A549 (cell line): ENCODE measurements at regions of chr5 and their contacts with region 1.

Region 1: GRCh38 chr5:176660860-176661641 is 13.8 kb downstream of the TSPAN17 start:
- DNase-seq: peak; percentile 75 to 95
- ATAC-seq: peak; percentile 64 to 90
- H3K4me3 ChIP-seq: no peak overlapping the region
- H3K27ac ChIP-seq: no peak overlapping the region
- H3K4me1 ChIP-seq: no peaks in the 10 kb centered on the region
- CTCF ChIP-seq: peak; percentile 93
- EP300 ChIP-seq: no peak
- POLR2A ChIP-seq: no peak
- RAD21 ChIP-seq: peak; percentile 96 to 97

Region 2: DNA sequence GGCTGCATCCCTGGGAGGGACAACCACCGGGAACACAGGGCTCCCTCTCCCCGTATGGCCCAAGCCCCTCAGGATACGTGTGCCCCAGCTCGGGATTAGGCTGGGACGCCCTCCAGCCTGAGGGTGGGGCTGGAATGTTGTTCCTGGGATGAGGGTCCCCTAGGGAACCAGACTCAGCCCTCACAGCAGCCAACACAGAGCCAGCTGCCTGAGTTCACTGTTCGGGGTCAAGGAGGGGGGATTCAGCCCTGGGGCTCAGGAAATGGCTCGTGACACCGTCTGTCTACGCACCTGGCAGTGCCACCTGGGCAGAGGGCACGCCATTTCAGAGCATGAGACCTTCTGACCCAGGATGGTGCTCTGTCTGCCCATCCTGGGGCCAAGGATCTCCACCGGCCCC is 132.8 kb before region 1 on chr5:
- CTCF ChIA-PET with region 1: no interaction called
- POLR2A ChIA-PET with region 1: no interaction called
- DNase-seq: no peak
- ATAC-seq: no peak
- H3K4me3 ChIP-seq: no peak overlapping the region
- H3K27ac ChIP-seq: no peak overlapping the region
- H3K4me1 ChIP-seq: peaks cover 17% of the 10 kb centered on the region
- CTCF ChIP-seq: no peak
- EP300 ChIP-seq: no peak
- POLR2A ChIP-seq: no peak
- RAD21 ChIP-seq: no peak

Region 3: DNA sequence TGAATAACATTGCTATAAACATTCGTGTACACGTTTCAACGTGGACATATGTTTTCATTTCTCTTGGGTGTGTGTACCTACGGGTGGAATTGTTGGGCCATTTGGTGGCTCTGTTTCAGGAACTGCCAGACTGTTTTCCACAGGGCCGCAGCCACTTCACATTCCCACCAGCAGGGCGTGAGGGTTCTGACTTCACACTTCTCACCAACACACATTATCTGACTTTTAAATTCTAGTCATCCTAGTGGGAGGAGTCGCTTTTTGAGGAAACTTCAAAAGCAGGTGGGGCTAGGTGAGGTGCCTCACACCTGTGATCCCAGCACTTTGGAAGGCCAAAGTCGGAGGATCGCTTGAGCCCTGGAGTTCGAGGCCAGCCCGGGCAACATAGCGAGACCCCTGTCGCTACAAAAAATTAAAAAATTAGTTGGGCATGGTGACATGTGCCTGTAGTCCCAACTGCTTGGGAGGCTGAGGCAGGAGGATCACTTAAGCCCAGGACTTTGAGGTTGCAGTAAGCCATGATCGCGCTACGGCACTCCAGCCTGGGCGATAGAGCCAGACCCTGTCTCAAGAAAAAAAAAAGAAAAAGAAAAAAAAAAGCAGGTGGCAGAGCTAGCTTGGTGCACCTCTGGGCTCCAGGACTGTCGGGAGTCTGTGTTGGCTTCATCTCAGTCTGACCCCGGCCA is 14.8 kb after region 1 on chr5:
- CTCF ChIA-PET with region 1: interaction called, 114 read pairs
- POLR2A ChIA-PET with region 1: no interaction called
- DNase-seq: peak; percentile 56 to 60
- ATAC-seq: peak; percentile 44 to 79; a peak in 5 of 6 replicates
- H3K4me3 ChIP-seq: no peak overlapping the region
- H3K27ac ChIP-seq: peak overlapping the region; percentile 6 to 56; a peak in 3 of 6 replicates
- H3K4me1 ChIP-seq: peaks cover 17% of the 10 kb centered on the region
- CTCF ChIP-seq: no peak
- EP300 ChIP-seq: no peak
- POLR2A ChIP-seq: no peak
- RAD21 ChIP-seq: no peak

Region 4: DNA sequence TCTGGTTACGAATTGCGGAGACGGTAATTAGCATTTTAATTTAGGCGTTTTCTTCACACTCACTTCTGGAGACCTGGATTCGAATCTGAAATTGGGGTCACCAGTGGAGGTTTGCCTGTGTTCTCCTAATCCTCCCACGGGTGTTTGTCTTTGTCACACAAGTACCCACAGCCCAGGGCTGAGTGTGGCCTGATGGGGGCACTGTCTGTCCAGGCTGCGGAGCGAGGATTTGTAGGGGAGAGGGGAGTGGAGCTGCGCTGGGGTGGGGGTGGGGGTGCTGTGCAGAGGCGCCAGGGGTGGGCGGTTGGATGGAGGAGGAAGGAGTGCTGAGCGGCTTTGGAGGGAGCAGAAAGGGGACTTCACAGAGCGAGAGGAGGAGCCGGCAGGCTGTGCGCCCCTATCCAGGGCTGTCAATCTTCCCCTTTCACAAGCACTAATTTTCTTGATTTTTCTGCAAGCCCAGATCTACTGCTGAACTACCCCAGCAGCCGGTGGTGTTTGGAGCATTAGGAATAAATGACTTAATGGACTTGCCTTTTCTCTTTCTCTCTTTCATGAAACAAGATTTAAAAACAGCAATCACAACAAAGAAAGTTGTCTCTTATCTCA is 39.3 kb after region 1 on chr5:
- CTCF ChIA-PET with region 1: interaction called, 24 read pairs
- POLR2A ChIA-PET with region 1: no interaction called
- DNase-seq: peak; percentile 24 to 34
- ATAC-seq: peak in 1 of 2 experiments; percentile 77; a peak in 3 of 6 replicates
- H3K4me3 ChIP-seq: no peak overlapping the region
- H3K27ac ChIP-seq: no peak overlapping the region
- H3K4me1 ChIP-seq: no peaks in the 10 kb centered on the region
- CTCF ChIP-seq: peak; percentile 51
- EP300 ChIP-seq: no peak
- POLR2A ChIP-seq: no peak
- RAD21 ChIP-seq: peak; percentile 64 to 68

Region 5: GRCh38 chr5:176772271-176773210 is 111.5 kb after region 1 on chr5:
- CTCF ChIA-PET with region 1: interaction called, 14 read pairs
- POLR2A ChIA-PET with region 1: no interaction called
- DNase-seq: no peak
- ATAC-seq: no peak
- H3K4me3 ChIP-seq: no peak overlapping the region
- H3K27ac ChIP-seq: no peak overlapping the region
- H3K4me1 ChIP-seq: no peaks in the 10 kb centered on the region
- CTCF ChIP-seq: no peak
- EP300 ChIP-seq: no peak
- POLR2A ChIP-seq: no peak
- RAD21 ChIP-seq: no peak

Region 6: GRCh38 chr5:176866707-176867310 is 205.8 kb after region 1 on chr5:
- CTCF ChIA-PET with region 1: interaction called, 10 read pairs
- POLR2A ChIA-PET with region 1: no interaction called
- DNase-seq: no peak
- ATAC-seq: no peak
- H3K4me3 ChIP-seq: no peak overlapping the region
- H3K27ac ChIP-seq: no peak overlapping the region
- H3K4me1 ChIP-seq: 0 out of 3 replicates have a peak, but pooled peaks cover 8% of the 10 kb centered on the region
- CTCF ChIP-seq: no peak
- EP300 ChIP-seq: no peak
- POLR2A ChIP-seq: no peak
- RAD21 ChIP-seq: no peak

Region 7: GRCh38 chr5:176995896-176996754 is 335.1 kb after region 1 on chr5:
- CTCF ChIA-PET with region 1: no interaction called
- POLR2A ChIA-PET with region 1: no interaction called
- DNase-seq: peak in 1 of 2 experiments; percentile 18
- ATAC-seq: peak; percentile 34 to 68; a peak in 5 of 6 replicates
- H3K4me3 ChIP-seq: no peak overlapping the region
- H3K27ac ChIP-seq: 0 out of 6 replicates have a peak overlapping the region, but pooled peaks of 1 of the 2 experiments have one; percentile 1
- H3K4me1 ChIP-seq: peaks cover 16% of the 10 kb centered on the region
- CTCF ChIP-seq: no peak
- EP300 ChIP-seq: no peak
- POLR2A ChIP-seq: no peak
- RAD21 ChIP-seq: no peak

Region 8: GRCh38 chr5:177071666-177072385 is 410.8 kb after region 1 on chr5:
- CTCF ChIA-PET with region 1: interaction called, 29 read pairs
- POLR2A ChIA-PET with region 1: no interaction called
- DNase-seq: peak; percentile 79 to 82
- ATAC-seq: peak; percentile 89 to 95
- H3K4me3 ChIP-seq: no peak overlapping the region
- H3K27ac ChIP-seq: no peak overlapping the region
- H3K4me1 ChIP-seq: peaks cover 7% of the 10 kb centered on the region; the same call in 1 of the 3 replicates
- CTCF ChIP-seq: peak; percentile 83
- EP300 ChIP-seq: no peak
- POLR2A ChIP-seq: no peak
- RAD21 ChIP-seq: peak; percentile 71 to 74